ENCODE measurements at regions of chrX and their contacts with region 1.

Region 1: DNA sequence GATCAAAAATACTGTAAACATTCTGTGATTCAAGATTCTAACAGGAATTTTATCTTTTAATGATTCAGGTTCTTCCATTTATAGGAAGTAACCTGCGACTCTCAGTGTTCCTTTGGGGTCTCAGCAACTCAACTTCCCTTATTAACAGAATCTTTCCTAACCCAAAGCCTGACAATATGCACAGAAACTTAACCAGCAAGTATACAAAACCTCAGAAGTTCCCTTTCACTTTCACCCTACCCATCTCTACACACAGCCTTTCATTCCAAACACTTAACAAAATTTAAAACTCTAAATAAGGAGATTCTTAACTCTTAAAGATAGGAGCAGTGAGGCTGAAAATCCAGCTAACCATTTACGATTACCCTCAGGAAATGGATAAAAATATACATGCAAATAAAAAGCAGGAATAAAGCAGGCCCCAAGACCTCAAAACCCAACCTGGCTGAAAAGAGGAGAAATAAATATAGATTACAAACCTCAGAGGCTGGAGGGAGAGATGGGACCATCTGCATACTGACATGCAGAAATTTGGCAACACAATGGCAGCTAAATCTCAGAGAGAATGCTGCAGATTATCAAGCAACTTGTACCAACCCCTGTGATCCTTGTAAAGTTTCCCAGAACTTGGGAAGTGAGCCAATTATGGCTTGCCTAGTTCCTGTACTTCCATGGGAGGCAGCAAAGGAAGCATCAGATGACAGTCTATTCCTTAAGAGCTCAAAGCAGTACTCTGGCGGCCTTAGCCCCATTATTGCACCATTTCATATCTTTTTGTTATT is 101.0 kb downstream of the ATP11C start:
- DNase-seq: peak; percentile 79
- H3K4me3 ChIP-seq: peak overlapping the region; percentile 19
- H3K27ac ChIP-seq: peak overlapping the region; percentile 66
- H3K4me1 ChIP-seq: peaks cover 82% of the 10 kb centered on the region
- H3K27me3 ChIP-seq: no peaks in the 10 kb centered on the region
- CTCF ChIP-seq: no peak

Region 2: DNA sequence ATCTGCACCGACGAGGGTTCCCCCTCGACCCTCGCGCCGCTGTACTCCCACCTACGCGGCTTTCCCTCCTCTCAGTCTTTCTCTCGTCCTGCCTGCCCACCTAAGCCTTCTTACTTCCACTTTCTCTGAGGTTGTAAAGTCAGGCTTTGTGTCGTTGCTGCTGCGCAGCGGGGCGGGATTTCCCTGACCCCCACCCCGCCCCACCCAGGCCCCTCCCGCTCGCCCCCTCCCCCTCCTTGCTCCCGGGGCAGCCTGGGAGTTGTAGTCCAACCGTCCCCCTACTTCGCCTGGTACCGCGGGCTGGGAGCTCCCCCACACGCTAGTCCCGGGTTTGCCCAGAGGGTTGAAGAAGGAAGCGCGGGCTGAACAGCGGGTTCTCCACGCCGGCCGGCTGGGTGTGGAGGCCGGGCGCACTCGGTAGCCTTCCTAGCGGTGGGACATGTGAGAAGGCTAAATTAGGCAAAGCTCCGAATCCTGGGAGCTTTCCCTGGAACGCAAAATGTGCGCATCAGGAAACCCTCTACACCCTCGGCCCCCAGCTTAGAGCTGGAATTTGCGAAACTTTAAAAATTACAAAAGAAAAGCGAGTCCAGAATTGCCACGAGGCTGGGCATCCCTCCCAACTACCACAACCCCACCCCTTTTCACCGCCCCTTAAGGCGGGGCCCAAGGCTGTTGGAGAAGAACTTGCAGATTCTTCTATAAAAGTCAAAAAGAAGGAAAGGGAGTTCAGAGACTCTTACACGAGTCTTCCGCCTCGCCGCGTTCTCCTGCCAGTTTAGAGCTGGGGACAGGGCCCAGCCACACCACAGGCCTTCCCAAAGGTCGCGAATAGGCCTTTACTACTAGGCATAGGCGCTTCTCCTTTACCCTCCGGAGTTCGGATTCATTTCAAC is 101.3 kb after region 1 on chrX and contains the start of gene ATP11C:
- CTCF ChIA-PET with region 1: no interaction called
- POLR2A ChIA-PET with region 1: no interaction called
- intact Hi-C with region 1: loop called (anchors 5 kb)
- DNase-seq: peak; percentile 92
- H3K4me3 ChIP-seq: peak within 1 kb of the TSS; percentile 79
- H3K27ac ChIP-seq: peak within 1 kb of the TSS; percentile 91
- H3K4me1 ChIP-seq: peaks cover 9% of the 10 kb centered on the region
- H3K27me3 ChIP-seq: no peaks in the 10 kb centered on the region
- CTCF ChIP-seq: no peak
- total RNA-seq, gene ATP11C: 88.5 and 93.1 TPM in 2 replicates

Region 3: DNA sequence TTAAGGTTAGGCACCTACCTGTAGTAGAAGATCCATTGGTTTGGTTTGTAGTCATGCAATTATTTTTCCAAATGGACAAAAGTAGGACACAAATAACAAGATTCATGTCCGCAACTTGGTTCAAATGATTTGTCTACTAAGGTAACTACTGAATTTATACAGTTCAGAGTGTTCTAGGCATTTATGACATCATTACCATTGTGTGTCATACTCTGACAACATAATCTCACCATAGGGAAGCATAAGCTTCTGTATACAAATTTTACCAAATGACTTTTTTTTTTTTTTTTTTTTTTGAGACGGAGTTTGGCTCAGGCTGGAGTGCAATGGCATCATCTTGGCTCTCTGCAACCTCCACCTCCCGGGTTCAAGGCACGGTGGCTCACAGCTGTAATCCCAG is 133.5 kb after region 1 on chrX and contains the start of gene CXorf66:
- CTCF ChIA-PET with region 1: no interaction called
- POLR2A ChIA-PET with region 1: no interaction called
- intact Hi-C with region 1: no loop called
- DNase-seq: no peak
- H3K4me3 ChIP-seq: no peak within 1 kb of the TSS
- H3K27ac ChIP-seq: no peak within 1 kb of the TSS
- H3K4me1 ChIP-seq: peaks cover 22% of the 10 kb centered on the region
- H3K27me3 ChIP-seq: no peaks in the 10 kb centered on the region
- CTCF ChIP-seq: no peak
- total RNA-seq, gene CXorf66: not detected in 2 replicates

Measured in A673 (cell line).